ENCODE measurements at regions of chr4 and their contacts with region 1.

Region 1: DNA sequence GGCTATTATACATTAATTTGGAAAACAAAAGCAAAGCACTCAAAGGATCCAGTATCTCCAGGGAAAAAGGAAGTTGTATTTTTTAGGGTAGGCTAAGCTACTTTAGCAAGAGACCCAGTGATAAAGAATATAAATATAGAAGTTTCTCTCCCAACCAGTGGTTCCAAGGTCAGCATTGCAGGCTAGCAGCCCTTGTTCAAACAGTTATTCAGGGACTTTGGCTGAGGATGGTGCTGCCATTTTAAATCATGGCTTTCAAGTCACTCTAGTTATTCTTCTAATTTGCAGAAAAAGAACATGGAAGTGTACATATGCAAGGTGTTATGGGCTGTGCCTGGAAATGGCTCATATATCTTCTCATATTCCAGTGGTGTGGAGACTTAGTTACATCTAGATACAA is 9.3 kb downstream of the SCOC start:
- H3K4me3 ChIP-seq: no peak overlapping the region
- H3K27ac ChIP-seq: no peak overlapping the region
- H3K4me1 ChIP-seq: no peaks in the 10 kb centered on the region
- CTCF ChIP-seq: no peak

Region 2: GRCh38 chr4:139754938-139755337 is 627.8 kb before region 1 on chr4:
- CTCF ChIA-PET with region 1: interaction called, 3 read pairs
- POLR2A ChIA-PET with region 1: interaction called, 10 read pairs
- H3K4me3 ChIP-seq: no peak overlapping the region
- H3K27ac ChIP-seq: no peak overlapping the region
- H3K4me1 ChIP-seq: no peaks in the 10 kb centered on the region
- CTCF ChIP-seq: no peak

Region 3: DNA sequence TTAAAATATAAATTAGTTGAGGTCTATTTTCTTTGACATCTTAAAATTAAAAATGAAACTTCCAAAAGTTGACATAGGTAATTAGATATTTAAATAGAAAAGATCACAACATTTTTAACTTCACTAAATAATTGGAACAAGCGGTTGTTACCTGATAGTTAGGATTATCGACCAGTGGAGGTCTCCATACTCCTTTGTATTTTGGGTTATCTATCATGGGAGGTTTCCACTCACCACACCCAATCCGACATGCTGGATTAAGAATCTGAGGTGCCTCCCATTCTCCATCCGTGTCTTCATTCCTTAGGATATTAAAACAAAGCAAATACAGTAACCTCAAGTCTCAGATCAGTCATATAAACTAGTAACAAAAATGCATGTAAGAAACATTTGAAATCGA is 12.9 kb after region 1 on chr4:
- CTCF ChIA-PET with region 1: no interaction called
- POLR2A ChIA-PET with region 1: no interaction called
- H3K4me3 ChIP-seq: no peak overlapping the region
- H3K27ac ChIP-seq: no peak overlapping the region
- H3K4me1 ChIP-seq: no peaks in the 10 kb centered on the region
- CTCF ChIP-seq: no peak

Measured in HEK293 (cell line).